Colonic mucosa (tissue), 4 donors: ENCODE measurements at regions of chr17 and their contacts with region 1.

Region 1: GRCh38 chr17:74790161-74791054 is 14.3 kb upstream of the NAT9 start:
- DNase-seq: no peak
- H3K4me3 ChIP-seq: no peak overlapping the region
- H3K27ac ChIP-seq: no peak overlapping the region
- H3K4me1 ChIP-seq: no peaks in the 10 kb centered on the region
- H3K27me3 ChIP-seq: no peaks in the 10 kb centered on the region
- CTCF ChIP-seq: no peak

Region 2: DNA sequence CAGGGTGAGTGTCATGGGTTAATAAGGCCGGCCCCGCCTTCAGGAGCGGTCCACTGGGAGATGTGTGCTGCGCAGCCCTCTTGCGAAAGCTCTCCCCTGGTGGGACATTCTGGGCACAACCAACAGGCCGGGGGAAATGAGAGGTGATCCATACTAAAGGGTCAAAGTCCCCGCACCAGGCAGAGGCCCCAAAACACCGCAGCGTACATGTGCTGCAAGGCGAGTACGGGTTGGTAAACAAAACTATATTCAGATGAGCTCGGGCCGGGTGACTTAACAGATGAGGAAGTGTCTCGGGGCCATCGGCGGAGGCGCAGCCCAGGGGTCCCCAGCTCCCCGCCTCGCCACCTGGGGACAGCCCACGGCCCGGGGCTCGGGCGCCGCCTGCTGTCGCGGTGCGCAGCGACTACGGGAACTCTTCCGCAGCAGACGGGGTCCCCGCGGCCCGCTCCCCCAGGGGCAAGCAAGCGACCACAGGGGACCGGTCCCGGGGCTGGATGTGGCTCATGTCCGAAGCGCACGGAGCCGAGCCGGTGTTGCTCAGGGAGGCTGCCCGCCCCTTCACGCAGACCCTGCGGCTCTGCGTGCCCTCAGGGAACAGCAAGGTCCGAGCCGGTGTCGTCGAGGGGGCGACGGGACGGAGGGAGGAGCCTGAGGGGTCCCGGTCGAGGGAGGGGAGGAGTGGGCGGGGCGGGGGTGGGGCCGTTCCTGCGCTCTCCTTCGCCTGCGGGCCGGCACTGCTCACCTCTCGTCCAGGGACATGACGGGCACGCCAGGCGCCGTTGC is 53.7 kb before region 1 on chr17 and contains the start of gene RAB37:
- intact Hi-C with region 1: no loop called
- DNase-seq: peak; percentile 58
- H3K4me3 ChIP-seq: peak within 1 kb of the TSS; percentile 35
- H3K27ac ChIP-seq: peak within 1 kb of the TSS; percentile 23
- H3K4me1 ChIP-seq: peaks cover 17% of the 10 kb centered on the region
- H3K27me3 ChIP-seq: peaks cover 19% of the 10 kb centered on the region
- CTCF ChIP-seq: peak; percentile 37
- total RNA-seq, gene RAB37: 4.5 to 7.2 TPM

Region 3: DNA sequence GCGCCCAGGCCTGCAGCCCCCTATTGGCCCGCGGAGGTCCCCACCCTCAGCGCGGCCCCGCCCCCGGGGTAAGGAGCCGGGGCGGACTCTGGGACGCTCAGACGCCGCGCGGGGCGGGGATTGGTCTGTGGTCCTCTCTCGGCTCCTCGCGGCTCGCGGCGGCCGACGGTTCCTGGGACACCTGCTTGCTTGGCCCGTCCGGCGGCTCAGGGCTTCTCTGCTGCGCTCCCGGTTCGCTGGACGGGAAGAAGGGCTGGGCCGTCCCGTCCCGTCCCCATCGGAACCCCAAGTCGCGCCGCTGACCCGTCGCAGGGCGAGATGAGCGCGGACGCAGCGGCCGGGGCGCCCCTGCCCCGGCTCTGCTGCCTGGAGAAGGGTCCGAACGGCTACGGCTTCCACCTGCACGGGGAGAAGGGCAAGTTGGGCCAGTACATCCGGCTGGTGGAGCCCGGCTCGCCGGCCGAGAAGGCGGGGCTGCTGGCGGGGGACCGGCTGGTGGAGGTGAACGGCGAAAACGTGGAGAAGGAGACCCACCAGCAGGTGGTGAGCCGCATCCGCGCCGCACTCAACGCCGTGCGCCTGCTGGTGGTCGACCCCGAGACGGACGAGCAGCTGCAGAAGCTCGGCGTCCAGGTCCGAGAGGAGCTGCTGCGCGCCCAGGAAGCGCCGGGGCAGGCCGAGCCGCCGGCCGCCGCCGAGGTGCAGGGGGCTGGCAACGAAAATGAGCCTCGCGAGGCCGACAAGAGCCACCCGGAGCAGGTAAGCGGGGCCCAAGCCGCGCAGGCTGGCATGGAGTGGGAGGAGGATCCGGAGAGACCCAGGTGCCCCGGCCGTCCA is 41.7 kb before region 1 on chr17 and contains the start of gene NHERF1:
- intact Hi-C with region 1: no loop called
- DNase-seq: peak; percentile 96
- H3K4me3 ChIP-seq: peak within 1 kb of the TSS; percentile 85
- H3K27ac ChIP-seq: peak within 1 kb of the TSS; percentile 81
- H3K4me1 ChIP-seq: peaks cover 23% of the 10 kb centered on the region
- H3K27me3 ChIP-seq: no peaks in the 10 kb centered on the region
- CTCF ChIP-seq: no peak
- total RNA-seq, gene NHERF1: 186 to 244 TPM

Region 4: DNA sequence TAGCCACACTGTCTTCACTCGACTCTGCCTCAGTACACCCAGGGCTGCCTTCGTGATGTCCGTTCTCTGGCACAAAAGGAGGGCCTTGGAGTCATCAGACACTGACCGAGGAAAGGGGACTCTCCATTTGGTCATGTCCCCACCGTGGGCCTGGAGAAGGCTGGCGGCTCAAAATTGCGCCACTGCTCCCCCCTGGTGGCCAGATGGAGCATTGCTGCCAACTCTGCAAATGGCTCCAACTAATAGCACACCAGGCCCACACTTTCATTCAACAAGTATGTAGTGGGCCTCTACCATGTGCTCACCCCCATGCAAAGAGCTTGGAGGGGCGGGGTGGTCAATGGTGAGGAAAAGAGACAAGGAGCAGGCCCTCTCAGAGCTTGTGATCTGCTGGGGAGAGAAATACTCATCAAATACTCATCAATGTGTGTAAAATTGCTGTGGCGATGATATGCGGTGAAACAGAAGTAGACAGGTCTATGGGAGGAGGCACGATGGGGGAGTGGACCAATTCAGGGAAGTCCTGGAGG is 74.5 kb after region 1 on chr17:
- intact Hi-C with region 1: loop called (anchors 2 kb)
- DNase-seq: peak; percentile 77
- H3K4me3 ChIP-seq: no peak overlapping the region
- H3K27ac ChIP-seq: no peak overlapping the region
- H3K4me1 ChIP-seq: peaks cover 9% of the 10 kb centered on the region
- H3K27me3 ChIP-seq: peaks cover 23% of the 10 kb centered on the region
- CTCF ChIP-seq: peak; percentile 96